Gastrocnemius medialis (tissue), 4 donors: ENCODE measurements at regions of chr12 and their contacts with region 1.

Region 1: GRCh38 chr12:48350249-48351021 is at the start of gene ZNF641:
- DNase-seq: peak; percentile 67 to 79
- ATAC-seq: peak; percentile 84 to 91
- H3K4me3 ChIP-seq: peak within 1 kb of the TSS; percentile 79 to 94 (median 90)
- H3K27ac ChIP-seq: peak within 1 kb of the TSS; percentile 92 to 98 (median 95)
- H3K4me1 ChIP-seq: peaks cover 17 to 24% of the 10 kb centered on the region in 2 donors
- H3K27me3 ChIP-seq: no peaks in the 10 kb centered on the region
- CTCF ChIP-seq: no peak
- POLR2A ChIP-seq: peak; percentile 60 to 66
- total RNA-seq, gene ZNF641: 31.8 to 43.1 (median 34.2) TPM

Region 2: DNA sequence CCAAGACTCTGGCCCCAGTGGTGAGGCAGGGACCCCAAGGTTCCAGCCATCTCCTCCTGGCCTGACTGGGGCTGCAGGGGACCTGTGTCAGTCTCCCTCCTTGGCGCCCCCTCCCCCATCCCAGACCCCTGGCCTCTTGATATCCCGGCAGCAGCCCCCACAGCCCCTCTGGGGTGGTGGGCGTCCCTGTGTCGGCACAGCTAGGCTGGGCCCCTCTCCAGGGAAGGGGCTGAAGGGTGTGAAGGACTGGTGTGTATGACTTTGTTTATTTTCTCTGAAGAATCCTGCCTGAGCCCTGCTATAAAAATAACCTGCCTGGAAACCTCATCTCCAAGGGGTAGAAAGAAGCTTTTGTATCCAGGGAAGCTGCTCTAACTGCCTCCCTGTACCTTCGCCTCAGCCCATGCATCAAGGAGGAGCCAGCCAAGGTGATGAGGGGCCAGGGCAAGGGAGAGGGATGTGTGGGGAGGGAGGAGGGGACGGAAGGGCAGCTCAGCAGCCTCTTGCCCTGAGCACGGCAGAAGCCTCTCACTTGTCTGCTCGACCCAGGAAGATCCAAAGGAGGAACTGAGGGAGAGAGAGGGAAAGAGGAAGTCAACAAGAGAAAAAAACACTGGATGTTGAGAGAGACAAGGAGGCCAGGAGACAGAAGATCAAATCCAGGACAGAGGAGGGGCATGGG is 320.8 kb before region 1 on chr12:
- in situ Hi-C with region 1: no loop called
- intact Hi-C with region 1: no loop called
- DNase-seq: no peak
- ATAC-seq: no peak
- H3K4me3 ChIP-seq: no peak overlapping the region
- H3K27ac ChIP-seq: no peak overlapping the region
- H3K4me1 ChIP-seq: peaks cover 16% of the 10 kb centered on the region in 2 donors
- H3K27me3 ChIP-seq: no peaks in the 10 kb centered on the region
- CTCF ChIP-seq: no peak
- POLR2A ChIP-seq: no peak

Region 3: DNA sequence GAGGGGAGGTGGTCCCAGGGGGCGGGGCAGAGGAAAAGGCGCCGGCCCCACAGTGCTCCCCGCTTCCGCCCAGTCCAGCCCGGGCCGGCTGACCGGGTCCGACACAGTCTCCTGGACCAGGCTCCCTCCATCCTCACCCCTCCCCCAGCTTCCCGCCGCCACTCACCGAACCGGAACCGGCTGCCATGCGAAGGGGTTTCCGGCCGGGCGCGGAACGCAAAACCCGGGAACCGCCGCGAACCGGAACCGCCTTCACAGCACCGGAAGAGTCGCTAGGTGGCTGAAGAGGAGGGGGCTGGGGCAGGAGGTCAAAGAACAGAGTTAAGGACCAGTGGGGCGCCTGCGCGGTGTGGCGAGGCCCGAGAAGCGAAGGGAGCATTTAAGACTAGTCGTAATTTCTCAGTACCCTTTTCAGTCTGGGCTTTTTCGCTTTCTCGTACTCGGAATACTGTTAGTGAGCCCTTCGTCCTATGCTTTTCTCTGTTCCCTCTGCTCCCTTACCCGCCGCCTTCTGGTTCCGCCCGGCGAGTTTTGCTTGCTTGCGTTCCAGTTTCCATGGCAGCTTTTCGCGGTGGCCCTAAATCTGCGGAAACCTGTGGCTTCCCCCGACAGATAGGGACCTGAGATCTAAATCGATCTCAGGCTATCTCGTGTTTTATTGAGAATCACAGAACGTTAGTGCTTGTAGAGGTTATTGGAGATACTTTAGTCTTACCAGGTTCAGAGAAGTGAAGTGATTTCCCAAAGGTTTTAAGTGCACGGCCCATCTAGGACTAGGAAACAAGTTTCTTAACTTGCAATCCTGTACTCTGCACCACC is 244.4 kb before region 1 on chr12 and contains the start of gene SENP1:
- in situ Hi-C with region 1: no loop called
- intact Hi-C with region 1: loop called (anchors 10 kb)
- DNase-seq: peak; percentile 81 to 87
- ATAC-seq: peak; percentile 94 to 97
- H3K4me3 ChIP-seq: peak within 1 kb of the TSS; percentile 77 to 92 (median 89)
- H3K27ac ChIP-seq: peak within 1 kb of the TSS; percentile 87 to 96 (median 90)
- H3K4me1 ChIP-seq: peaks cover 20 to 27% of the 10 kb centered on the region in 2 donors
- H3K27me3 ChIP-seq: no peaks in the 10 kb centered on the region
- CTCF ChIP-seq: peak in 4 of 5 experiments; percentile 6 to 51 (median 42)
- POLR2A ChIP-seq: peak; percentile 38 to 46
- total RNA-seq, gene SENP1: 8.7 to 19.1 (median 13.1) TPM

Region 4: GRCh38 chr12:48197971-48198671 is 152.3 kb before region 1 on chr12:
- in situ Hi-C with region 1: no loop called
- intact Hi-C with region 1: loop called (anchors 1 kb)
- DNase-seq: peak; percentile 98 to 99
- ATAC-seq: peak; percentile 92 to 96
- H3K4me3 ChIP-seq: peak overlapping the region; percentile 88 to 94 (median 92)
- H3K27ac ChIP-seq: peak overlapping the region; percentile 97 to 100 (median 99)
- H3K4me1 ChIP-seq: peaks cover 20% of the 10 kb centered on the region in 2 donors
- H3K27me3 ChIP-seq: no peaks in the 10 kb centered on the region
- CTCF ChIP-seq: no peak
- POLR2A ChIP-seq: peak; percentile 97 to 98

Region 5: GRCh38 chr12:48296586-48297282 is 53.7 kb before region 1 on chr12:
- in situ Hi-C with region 1: no loop called
- intact Hi-C with region 1: no loop called
- DNase-seq: peak; percentile 36 to 63
- ATAC-seq: peak; percentile 95 to 96
- H3K4me3 ChIP-seq: peak overlapping the region; percentile 54 to 68 (median 58)
- H3K27ac ChIP-seq: peak overlapping the region in 1 of 4 donors; percentile 33
- H3K4me1 ChIP-seq: peaks cover 0 to 4% of the 10 kb centered on the region in 2 donors
- H3K27me3 ChIP-seq: no peaks in the 10 kb centered on the region
- CTCF ChIP-seq: no peak
- POLR2A ChIP-seq: peak in 1 of 2 donors; percentile 7

Region 6: DNA sequence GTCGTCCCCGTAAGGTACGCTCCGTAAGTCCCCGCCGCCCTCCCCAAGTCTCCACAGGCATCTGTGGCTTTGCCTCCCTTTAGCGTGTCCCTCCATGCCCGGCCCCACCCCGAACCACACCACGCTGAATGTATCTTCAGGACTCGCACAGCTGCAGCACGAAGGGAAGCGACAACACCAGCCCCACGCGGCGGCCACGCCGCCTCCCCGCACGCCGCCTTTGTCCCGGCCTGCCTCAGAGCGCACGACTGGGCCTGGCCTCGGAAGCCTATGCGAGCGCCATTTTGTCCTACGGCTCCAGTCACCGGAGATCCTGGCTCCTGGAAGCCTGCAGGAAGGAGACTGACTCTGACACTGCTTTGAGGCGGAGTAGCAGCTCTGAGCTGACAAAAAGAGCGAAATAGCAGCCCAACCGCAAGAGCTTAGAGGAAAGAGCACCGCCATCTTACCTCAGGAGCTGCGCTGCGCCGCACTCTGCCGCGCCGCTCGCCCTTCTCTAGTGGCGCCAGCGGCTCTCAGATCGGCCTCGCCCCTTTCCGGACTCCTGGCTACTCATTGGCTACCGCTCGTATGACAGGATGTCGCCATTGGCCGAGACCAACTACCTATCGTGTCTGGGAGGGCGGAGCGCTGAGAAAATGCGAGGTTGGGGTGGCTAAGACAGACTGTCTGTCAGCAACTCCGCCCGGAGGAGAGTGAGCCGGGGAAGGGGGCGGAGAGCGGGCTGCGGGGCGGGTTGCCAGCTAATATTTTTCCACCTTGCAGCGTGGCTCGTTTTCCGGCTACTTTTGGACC is 331.5 kb after region 1 on chr12 and contains the start of gene KANSL2:
- in situ Hi-C with region 1: no loop called
- intact Hi-C with region 1: loop called (anchors 5 kb)
- DNase-seq: peak; percentile 100
- ATAC-seq: peak; percentile 95 to 96
- H3K4me3 ChIP-seq: peak within 1 kb of the TSS; percentile 69 to 99 (median 90)
- H3K27ac ChIP-seq: peak within 1 kb of the TSS; percentile 88 to 99 (median 96)
- H3K4me1 ChIP-seq: peaks cover 42 to 46% of the 10 kb centered on the region in 2 donors
- H3K27me3 ChIP-seq: no peaks in the 10 kb centered on the region
- CTCF ChIP-seq: no peak
- POLR2A ChIP-seq: peak; percentile 99
- total RNA-seq, gene KANSL2: 69.0 to 107 (median 76.4) TPM

Region 7: DNA sequence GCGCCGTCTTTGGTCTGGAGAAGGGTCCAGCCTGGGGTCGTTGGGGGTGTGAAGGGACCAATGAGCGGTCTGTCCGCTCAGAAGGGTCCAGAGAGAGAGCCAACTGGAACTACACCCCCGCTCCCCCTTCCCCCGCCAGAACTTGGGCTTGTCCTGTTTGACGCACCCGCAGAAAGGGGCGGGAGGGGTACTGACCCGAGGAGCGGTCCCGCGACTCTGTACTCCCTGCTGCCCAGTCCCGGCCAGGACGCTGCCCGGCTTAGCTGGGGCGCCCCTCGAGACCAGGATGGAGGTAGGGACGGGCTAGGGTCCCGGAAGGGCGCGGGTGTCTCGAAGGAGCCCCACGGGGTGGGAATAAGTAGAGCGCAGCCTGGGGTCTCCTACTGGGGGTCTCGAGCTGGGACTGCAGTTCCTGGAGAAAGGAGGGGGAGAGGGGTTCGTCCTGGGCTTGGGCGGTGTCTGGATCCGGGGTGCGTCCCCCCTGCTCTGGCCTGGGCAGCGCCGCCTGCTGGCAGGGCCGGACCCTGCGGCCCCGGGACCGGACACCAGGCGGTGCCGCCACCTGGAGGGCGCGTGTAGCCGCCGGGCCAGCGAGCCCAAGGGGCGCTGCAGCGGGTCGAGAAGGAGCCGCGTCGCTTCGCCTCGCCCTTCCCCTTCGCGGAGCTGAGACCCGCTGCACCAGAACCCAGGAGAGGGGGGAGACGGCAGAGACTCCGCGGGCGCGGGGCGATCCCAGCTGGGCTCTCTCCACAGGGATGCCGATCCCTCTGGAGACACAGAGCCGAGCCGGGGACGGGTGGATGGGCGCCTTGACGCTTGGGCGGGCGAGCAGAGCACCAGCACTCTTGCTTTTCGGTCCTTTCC is 464.1 kb after region 1 on chr12:
- in situ Hi-C with region 1: no loop called
- intact Hi-C with region 1: loop called (anchors 10 kb)
- DNase-seq: peak; percentile 49 to 69
- ATAC-seq: peak; percentile 81 to 84
- H3K4me3 ChIP-seq: peak overlapping the region; percentile 78 to 87 (median 82)
- H3K27ac ChIP-seq: peak overlapping the region; percentile 79 to 85 (median 80)
- H3K4me1 ChIP-seq: peaks cover 21 to 33% of the 10 kb centered on the region in 2 donors
- H3K27me3 ChIP-seq: peaks cover 6 to 24% (median 19%) of the 10 kb centered on the region in 3 donors
- CTCF ChIP-seq: peak; percentile 90 to 100 (median 95)
- POLR2A ChIP-seq: peak in 1 of 2 donors; percentile 54

Region 8: DNA sequence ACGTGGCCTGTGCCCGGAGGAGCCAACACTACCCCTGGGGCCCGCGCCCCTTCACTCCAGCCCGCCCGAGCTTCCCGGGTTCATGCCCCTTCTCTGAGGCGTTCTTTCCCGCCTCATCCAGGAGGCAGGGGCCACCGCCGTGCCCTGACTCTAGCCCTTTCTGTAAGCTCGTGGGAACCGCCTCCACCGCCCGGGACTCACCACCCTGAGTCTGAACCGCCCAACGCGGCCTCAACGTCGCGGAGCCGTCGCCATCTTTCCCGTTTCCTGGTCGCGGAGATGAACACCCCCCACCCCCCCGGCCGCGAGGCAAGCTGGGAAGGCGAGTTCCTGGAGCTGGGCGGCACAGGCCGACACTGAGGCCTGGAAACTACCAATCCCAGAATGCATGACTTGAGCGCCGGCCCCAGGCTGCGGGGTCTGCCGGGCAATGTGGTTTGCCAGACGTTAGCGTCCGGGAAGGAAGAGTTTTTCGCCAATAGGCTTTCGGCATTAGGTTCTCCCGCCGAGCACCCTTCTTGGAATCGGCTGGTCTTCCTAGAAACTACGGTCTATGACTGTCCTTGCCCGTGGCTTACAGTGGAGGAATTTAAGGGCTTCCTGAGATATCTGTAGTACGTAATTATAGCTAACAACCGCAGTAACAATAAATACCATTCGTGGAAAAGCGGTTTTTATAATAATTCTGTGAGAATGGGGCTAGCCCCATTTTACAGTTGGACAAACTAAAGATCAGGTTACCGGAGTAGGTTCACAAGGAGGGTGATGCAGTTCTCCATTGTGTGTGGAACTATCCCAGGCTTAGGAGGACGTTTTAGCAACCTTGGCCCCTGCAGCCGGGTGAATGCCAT is 501.7 kb after region 1 on chr12 and contains the start of gene DDX23:
- in situ Hi-C with region 1: no loop called
- intact Hi-C with region 1: loop called (anchors 5 kb)
- DNase-seq: peak; percentile 93 to 94
- ATAC-seq: peak; percentile 95 to 96
- H3K4me3 ChIP-seq: peak within 1 kb of the TSS; percentile 77 to 100 (median 86)
- H3K27ac ChIP-seq: peak within 1 kb of the TSS; percentile 72 to 89 (median 87)
- H3K4me1 ChIP-seq: peaks cover 17 to 22% of the 10 kb centered on the region in 2 donors
- H3K27me3 ChIP-seq: no peaks in the 10 kb centered on the region
- CTCF ChIP-seq: no peak
- POLR2A ChIP-seq: peak; percentile 22 to 55
- total RNA-seq, gene DDX23: 55.8 to 80.6 (median 75.7) TPM

Region 9: DNA sequence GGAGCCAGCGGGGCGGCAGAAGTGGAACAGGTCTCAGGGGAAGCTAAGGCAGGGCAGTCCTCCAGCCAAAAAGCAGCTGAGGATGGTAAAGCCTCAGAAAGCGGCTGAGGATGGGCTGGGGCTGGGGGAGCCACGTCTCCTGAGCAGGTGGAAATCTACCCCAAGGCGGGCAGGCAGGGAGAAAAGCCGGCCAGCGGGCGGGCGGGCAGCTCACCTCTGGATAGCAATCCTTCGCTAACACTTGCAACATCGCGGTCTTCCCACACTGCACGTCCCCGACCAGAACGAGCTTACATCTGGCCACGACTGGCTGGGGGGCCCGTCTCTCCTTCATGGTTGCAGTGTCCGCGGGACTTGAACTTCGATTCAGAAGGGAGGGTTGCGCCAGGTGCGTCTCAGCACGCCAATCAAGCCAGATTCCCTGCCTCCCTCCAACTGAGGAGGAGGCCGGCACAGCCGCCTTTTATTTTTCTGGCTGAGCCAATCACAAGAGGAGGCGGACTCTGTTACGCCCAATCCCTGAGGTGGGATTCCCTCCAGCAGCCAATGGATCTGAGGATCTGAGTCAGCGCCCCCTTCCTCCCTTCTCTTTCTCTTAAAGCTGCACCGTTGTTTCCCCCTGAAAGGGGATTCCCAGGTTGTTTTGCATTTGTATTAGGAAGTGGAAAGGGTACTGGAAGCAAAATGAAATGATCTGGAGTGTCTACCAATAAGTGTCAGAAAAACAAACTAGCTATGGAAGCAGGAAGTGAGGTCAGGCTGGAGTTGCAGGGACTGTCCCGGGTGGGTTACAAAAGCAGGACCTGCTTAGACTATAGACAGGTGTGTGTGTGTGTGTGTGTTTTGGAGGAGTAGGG is 515.2 kb after region 1 on chr12 and contains the start of gene RND1:
- in situ Hi-C with region 1: no loop called
- intact Hi-C with region 1: loop called (anchors 5 kb)
- DNase-seq: peak; percentile 84 to 86
- ATAC-seq: peak; percentile 100
- H3K4me3 ChIP-seq: peak within 1 kb of the TSS; percentile 52 to 87 (median 71)
- H3K27ac ChIP-seq: peak within 1 kb of the TSS in 3 of 4 donors; percentile 33 to 44 (median 39)
- H3K4me1 ChIP-seq: peaks cover 5% of the 10 kb centered on the region in 2 donors
- H3K27me3 ChIP-seq: peaks cover 0 to 10% (median 10%) of the 10 kb centered on the region in 3 donors
- CTCF ChIP-seq: no peak
- POLR2A ChIP-seq: peak; percentile 76 to 94
- total RNA-seq, gene RND1: 0.36 TPM in 1 of 4 donors, not detected in the others